ENCODE measurements at regions of chr1 and their contacts with region 1.

Region 1: GRCh38 chr1:233326811-233327650 is 493 bp upstream of the MAP3K21 start:
- H3K4me3 Mint-ChIP-seq: peak overlapping the region; percentile 71
- H3K27ac Mint-ChIP-seq: peak overlapping the region; percentile 71
- H3K4me1 Mint-ChIP-seq: peaks cover 21% of the 10 kb centered on the region
- H3K27me3 Mint-ChIP-seq: peaks cover 17% of the 10 kb centered on the region

Region 2: GRCh38 chr1:233269656-233270055 is 57.4 kb before region 1 on chr1:
- intact Hi-C with region 1: no loop called
- H3K4me3 Mint-ChIP-seq: no peak overlapping the region
- H3K27ac Mint-ChIP-seq: no peak overlapping the region
- H3K4me1 Mint-ChIP-seq: peaks cover 16% of the 10 kb centered on the region
- H3K27me3 Mint-ChIP-seq: no peaks in the 10 kb centered on the region

Region 3: GRCh38 chr1:233355841-233356704 is 29.0 kb after region 1 on chr1:
- intact Hi-C with region 1: loop called (anchors 2 kb)
- H3K4me3 Mint-ChIP-seq: peak overlapping the region; percentile 7
- H3K27ac Mint-ChIP-seq: peak overlapping the region; percentile 82
- H3K4me1 Mint-ChIP-seq: peaks cover 36% of the 10 kb centered on the region
- H3K27me3 Mint-ChIP-seq: no peaks in the 10 kb centered on the region